ENCODE measurements at regions of chr16 and their contacts with region 1.

Region 1: DNA sequence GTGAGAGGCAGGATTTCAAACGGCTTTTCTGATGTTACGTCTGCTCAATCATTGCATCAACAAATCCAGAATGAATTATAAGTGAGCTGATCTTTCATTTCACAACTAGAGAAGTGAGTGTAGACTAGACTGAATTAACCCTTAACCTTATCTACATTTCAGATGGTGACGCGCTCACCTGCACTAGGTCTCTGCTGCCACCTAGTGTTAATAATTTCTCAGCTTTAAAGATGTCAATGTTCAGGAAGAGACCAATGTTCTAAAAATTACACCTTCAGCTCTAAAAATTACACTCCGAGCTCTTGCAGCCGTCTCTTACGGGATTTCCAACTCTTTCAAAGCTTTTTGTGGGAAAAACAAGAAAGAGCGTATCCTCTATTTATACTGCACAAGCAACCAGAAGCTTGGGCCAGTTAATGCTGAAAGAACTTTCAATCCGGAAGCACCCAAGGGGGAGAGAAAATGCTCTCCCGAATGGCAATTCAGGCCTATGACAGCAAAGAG is 88.2 kb upstream of the FA2H start:
- DNase-seq: no peak
- ATAC-seq: peak; percentile 90
- H3K4me3 ChIP-seq: no peak overlapping the region
- H3K27ac ChIP-seq: no peak overlapping the region
- H3K4me1 ChIP-seq: no peaks in the 10 kb centered on the region
- H3K27me3 ChIP-seq: no peaks in the 10 kb centered on the region
- CTCF ChIP-seq: peak; percentile 78

Region 2: DNA sequence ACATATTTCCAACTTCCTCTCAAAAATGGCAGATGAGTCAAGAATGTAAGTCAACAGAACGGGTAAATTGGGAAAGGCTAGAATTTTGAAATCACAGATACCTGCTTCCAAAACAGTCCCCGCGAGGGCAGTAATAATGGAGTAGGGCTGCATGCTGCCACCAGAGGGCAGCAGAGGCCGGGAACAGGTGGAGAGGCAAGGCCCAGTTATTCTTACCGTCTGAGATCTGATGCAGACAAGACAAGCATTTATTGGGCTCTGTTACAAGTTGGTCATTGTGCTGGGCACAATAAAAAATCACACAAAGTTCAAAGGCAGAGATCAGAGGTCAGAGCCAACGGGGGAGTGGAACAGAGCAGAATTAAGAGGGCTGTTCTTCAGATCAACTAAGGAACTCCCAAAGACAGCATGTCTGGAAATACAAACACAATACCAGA is 153.3 kb before region 1 on chr16:
- intact Hi-C with region 1: loop called (anchors 10 kb)
- DNase-seq: peak; percentile 89
- ATAC-seq: peak; percentile 99
- H3K4me3 ChIP-seq: no peak overlapping the region
- H3K27ac ChIP-seq: no peak overlapping the region
- H3K4me1 ChIP-seq: no peaks in the 10 kb centered on the region
- H3K27me3 ChIP-seq: no peaks in the 10 kb centered on the region
- CTCF ChIP-seq: peak; percentile 98

Region 3: DNA sequence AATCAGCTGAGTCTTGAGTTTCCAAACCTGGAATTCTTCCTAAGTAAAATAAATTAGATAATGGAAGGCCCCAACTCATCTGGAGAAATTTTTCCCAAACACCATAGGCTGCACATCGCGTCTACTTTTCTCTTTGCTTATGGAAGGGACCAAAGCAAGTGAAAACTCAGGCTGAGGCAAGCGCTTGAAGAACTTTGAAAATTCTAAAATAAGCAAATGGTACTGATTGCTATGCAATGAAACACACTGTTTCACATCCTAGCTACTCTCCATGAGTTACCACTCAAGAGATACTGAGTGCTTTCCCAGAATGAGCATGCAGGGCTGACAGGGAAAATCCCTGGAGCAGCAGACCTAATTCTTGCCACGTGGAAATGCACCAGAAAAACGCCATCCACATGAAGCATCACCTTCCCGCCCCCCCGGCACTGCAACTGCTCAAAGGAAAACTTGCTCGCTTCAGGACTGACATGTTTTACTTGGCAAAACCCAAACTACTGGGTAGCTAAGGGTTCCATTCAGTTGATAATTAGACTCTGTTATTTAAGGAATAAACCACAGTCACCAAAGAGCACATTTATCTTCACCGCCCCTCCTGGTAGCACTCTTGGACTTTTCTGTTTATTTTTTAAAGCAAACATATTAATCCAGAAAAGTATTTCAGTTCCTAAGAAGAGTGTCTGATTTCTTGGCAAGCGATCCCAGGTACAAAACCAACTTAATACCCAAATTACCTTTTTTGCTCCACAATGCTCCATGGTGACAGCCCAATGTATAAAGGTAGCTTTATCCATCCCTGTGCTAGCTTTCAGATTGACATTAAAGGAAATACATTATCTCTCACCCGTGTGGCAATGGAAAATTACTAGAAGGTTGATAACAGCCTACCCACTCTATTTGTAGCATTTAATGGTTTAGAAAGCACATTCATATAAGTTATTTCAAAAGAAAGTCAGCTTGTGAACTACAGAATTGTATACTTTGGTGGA is 59.7 kb after region 1 on chr16:
- intact Hi-C with region 1: no loop called
- DNase-seq: no peak
- ATAC-seq: peak; percentile 47
- H3K4me3 ChIP-seq: no peak overlapping the region
- H3K27ac ChIP-seq: no peak overlapping the region
- H3K4me1 ChIP-seq: no peaks in the 10 kb centered on the region
- H3K27me3 ChIP-seq: no peaks in the 10 kb centered on the region
- CTCF ChIP-seq: no peak